ENCODE measurements at regions of chr16 and their contacts with region 1.

Region 1: DNA sequence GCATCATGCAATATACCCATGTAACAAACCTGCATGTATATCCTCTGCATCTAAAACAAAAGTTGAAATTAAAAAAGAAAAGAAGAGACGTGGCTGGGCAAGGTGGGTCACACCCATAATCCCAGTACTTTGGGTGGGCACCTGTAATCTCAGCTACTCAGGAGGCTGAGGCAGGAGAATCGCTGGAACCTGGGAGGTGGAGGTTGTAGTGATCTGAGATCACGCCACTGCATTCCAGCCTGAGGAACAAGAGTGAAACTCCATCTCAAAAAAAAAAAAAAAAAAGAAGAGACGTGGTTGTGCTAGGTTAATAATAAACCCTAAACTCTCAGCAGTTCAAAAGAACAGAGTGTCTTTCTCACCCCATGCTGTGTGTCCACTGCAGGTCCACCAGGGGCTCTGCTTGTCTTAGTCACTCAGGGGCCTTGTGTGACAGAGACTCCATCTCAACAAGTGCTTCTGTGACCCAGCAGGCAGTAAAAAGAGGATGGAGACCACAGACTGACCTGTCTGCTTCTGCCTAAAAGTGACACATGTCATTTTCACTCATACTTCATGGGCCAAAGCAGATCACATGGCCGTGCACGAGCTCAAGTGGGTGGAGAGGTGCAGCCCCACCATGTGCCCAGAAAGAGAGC is 22.3 kb upstream of the N4BP1 start:
- DNase-seq: no peak
- H3K4me3 ChIP-seq: no peak overlapping the region
- H3K4me3 Mint-ChIP-seq: no peak overlapping the region
- H3K27ac ChIP-seq: no peak overlapping the region
- H3K27ac Mint-ChIP-seq: peak overlapping the region in 1 of 7 donors; percentile 75
- H3K4me1 ChIP-seq: peaks cover 4% of the 10 kb centered on the region
- H3K4me1 Mint-ChIP-seq: peaks cover 4 to 11% (median 5%) of the 10 kb centered on the region in 4 donors
- H3K27me3 ChIP-seq: no peaks in the 10 kb centered on the region
- H3K27me3 Mint-ChIP-seq: peaks cover 3 to 7% of the 10 kb centered on the region in 2 donors

Region 2: DNA sequence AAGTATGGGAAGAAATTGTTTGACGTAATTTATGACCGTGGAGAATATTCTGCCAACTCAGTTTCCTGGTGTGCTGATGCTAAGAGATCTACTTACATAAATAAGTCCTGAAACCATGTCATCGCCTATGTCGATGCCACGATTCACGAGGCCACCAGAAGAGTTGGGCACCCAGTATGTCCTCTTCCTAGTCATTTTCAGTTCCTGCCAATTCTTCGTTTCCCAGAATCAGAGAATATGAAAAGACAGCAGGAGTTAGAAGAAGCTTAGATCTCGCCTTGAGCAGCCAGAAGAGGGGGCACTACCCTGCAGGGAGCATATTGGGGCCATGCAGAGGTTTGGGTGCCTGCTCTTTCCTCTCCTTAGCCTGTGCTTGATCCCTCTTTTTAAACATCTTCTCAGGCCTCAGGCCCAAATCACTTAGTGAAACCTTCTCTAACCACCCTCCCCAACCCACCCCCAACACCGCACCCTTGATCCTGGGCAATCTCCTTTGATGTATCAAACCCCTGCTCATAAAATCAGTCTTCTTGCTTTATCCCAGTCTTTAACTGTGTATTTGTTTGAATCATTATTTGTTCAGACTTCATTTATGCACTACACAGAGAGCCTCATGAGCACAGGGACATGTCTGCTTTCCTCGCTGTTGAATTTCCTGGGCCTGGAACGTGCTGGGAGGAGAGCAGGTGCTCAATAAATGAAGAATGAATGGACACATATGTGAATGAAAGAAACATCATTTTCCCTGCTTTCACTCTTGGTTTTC is 400.3 kb before region 1 on chr16:
- CTCF ChIA-PET with region 1: interaction called, 8 read pairs
- POLR2A ChIA-PET with region 1: no interaction called
- intact Hi-C with region 1: loop called (anchors 5 kb)
- DNase-seq: peak in 1 of 5 donors; percentile 11
- H3K4me3 ChIP-seq: no peak overlapping the region
- H3K4me3 Mint-ChIP-seq: no peak overlapping the region
- H3K27ac ChIP-seq: no peak overlapping the region
- H3K27ac Mint-ChIP-seq: no peak overlapping the region
- H3K4me1 ChIP-seq: no peaks in the 10 kb centered on the region
- H3K4me1 Mint-ChIP-seq: no peaks in the 10 kb centered on the region
- H3K27me3 ChIP-seq: no peaks in the 10 kb centered on the region
- H3K27me3 Mint-ChIP-seq: peaks cover 5 to 6% of the 10 kb centered on the region in 2 donors

Region 3: DNA sequence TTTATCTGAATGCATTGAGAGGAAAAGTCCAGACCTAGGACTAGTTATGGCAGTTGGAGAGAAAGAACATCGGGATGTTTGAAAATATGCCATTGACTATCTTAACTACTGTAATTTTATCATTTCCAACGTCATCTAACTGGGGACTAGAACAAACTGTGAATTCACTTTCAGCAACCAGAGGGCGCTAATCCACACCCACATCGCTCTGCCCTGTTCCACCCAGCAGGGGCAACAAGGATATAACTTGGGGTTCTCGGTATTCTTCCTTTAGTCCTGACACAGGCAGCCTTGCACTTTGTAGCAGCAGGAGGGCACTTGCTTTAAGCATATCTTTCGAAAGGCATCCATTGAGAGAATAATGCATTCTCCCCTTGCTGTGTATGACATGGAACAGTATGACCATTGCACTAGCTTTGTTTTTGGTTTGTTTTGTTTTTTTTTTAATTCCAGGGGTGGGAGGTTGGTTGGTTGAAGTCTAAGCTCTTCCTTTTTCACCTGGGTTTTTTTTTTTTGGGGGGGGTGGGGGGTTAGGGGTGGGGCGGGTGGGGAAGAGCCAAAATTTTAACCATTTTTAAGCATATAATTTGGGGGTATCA is 278.6 kb before region 1 on chr16:
- CTCF ChIA-PET with region 1: interaction called, 163 read pairs
- POLR2A ChIA-PET with region 1: interaction called, 4 read pairs
- intact Hi-C with region 1: loop called (anchors 1 kb)
- DNase-seq: peak; percentile 71 to 81 (median 73)
- H3K4me3 ChIP-seq: no peak overlapping the region
- H3K4me3 Mint-ChIP-seq: no peak overlapping the region
- H3K27ac ChIP-seq: no peak overlapping the region
- H3K27ac Mint-ChIP-seq: peak overlapping the region in 6 of 7 donors; percentile 1 to 86 (median 60)
- H3K4me1 ChIP-seq: peaks cover 3% of the 10 kb centered on the region
- H3K4me1 Mint-ChIP-seq: peaks cover 5 to 22% (median 7%) of the 10 kb centered on the region in 4 donors
- H3K27me3 ChIP-seq: no peaks in the 10 kb centered on the region
- H3K27me3 Mint-ChIP-seq: no peaks in the 10 kb centered on the region

Region 4: DNA sequence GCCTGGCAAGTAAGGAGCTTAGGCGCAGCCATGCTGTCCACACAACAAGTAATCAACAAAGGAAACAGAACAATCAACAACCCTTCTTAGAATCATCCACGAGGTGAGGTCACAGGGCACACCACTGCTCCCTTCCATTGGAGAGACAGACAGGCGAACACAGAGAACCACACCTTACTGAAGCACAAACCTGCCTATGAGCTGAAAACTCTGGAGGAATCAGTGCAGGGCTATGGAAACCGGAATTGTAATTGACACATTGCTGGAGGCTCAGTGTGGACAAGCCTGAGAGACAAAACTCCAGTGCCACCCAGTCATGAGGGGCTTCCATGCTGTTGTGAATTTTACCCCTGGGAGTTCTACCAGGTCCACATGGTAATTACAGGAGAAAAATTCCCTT is 119.7 kb before region 1 on chr16:
- CTCF ChIA-PET with region 1: interaction called, 15 read pairs
- POLR2A ChIA-PET with region 1: no interaction called
- intact Hi-C with region 1: no loop called
- DNase-seq: no peak
- H3K4me3 ChIP-seq: no peak overlapping the region
- H3K4me3 Mint-ChIP-seq: no peak overlapping the region
- H3K27ac ChIP-seq: no peak overlapping the region
- H3K27ac Mint-ChIP-seq: no peak overlapping the region
- H3K4me1 ChIP-seq: no peaks in the 10 kb centered on the region
- H3K4me1 Mint-ChIP-seq: no peaks in the 10 kb centered on the region
- H3K27me3 ChIP-seq: no peaks in the 10 kb centered on the region
- H3K27me3 Mint-ChIP-seq: peaks cover 2 to 3% of the 10 kb centered on the region in 2 donors

Region 5: DNA sequence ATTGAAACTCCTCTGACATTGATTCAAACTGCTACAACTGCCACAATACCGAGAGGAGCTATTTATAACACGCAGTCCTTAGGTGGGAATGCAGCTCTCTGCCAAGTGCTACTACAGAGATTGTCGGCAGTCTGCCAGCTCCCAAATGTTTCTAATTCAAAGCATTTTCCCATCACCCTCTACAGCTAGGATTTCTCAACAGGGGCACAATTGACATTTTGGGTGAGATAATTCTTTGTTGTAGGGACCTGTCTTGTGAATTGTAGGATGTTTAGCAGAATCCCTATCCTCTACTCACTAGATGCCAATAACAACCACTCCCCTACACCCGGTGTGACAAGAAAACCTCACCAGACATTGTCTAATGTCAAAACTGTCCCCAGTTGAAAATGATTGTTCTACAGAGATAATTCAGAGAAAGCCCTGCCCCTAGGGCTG is 14.5 kb before region 1 on chr16:
- CTCF ChIA-PET with region 1: interaction called, 27 read pairs
- POLR2A ChIA-PET with region 1: interaction called, 5 read pairs
- intact Hi-C with region 1: no loop called
- DNase-seq: no peak
- H3K4me3 ChIP-seq: no peak overlapping the region
- H3K4me3 Mint-ChIP-seq: no peak overlapping the region
- H3K27ac ChIP-seq: no peak overlapping the region
- H3K27ac Mint-ChIP-seq: no peak overlapping the region
- H3K4me1 ChIP-seq: peaks cover 11% of the 10 kb centered on the region
- H3K4me1 Mint-ChIP-seq: peaks cover 10 to 31% (median 17%) of the 10 kb centered on the region in 4 donors
- H3K27me3 ChIP-seq: no peaks in the 10 kb centered on the region
- H3K27me3 Mint-ChIP-seq: no peaks in the 10 kb centered on the region

Measured in CD4-positive, alpha-beta memory T cell (primary cell).